ENCODE measurements at regions of chr6 and their contacts with region 1.

Region 1: DNA sequence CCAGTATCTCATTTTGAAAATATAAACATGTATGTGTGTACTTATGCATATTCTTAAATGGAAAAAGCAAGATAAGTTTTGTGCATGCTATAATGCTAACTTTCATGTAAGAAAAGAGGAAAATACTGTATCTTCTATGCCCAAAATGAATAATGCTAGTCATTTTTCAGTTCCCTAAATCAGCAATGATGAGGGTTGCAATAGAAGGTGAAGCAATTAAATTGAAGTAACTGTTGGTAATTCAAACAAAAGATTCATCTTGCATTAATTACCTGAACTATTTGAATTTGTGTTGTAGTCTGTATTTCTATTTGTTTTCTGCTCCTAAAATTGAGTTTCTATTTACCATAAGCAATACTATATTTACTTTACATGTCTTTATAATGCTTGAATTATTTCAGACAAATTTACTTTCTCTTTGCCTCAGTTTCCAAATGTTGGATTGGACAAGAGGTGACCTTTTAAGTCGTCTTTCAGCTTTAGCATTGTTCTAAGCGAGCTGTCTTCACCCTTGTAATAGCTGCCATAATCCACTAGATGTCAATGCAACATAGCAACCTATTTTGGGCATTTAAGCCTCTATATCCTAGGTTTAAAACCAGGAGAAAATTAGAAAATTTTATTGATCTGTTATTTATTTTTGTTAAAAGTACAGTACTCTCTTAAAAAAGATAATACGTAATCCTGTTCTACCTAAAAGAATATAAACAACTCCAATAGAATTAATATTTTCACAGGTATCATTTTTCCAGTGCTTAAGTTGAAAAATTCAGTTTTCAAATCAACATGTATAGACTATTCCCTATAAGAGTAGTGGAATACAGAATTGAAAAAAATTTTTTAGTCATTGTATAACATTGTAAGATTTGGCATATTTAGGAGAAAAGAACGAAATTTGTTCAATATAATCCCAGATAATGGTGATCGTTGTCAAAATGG is 52.3 kb upstream of the IFNGR1 start:
- DNase-seq: peak in 1 of 2 experiments; percentile 50
- H3K4me3 ChIP-seq: no peak overlapping the region
- H3K4me3 Mint-ChIP-seq: no peak overlapping the region
- H3K27ac Mint-ChIP-seq: no peak overlapping the region
- H3K4me1 ChIP-seq: peaks cover 4% of the 10 kb centered on the region; the same call in 1 of the 2 replicates
- H3K4me1 Mint-ChIP-seq: no peaks in the 10 kb centered on the region
- H3K27me3 ChIP-seq: no peaks in the 10 kb centered on the region
- H3K27me3 Mint-ChIP-seq: no peaks in the 10 kb centered on the region
- CTCF ChIP-seq: peak; percentile 76 to 88

Region 2: GRCh38 chr6:137258170-137258569 is 13.3 kb before region 1 on chr6:
- CTCF ChIA-PET with region 1: no interaction called
- POLR2A ChIA-PET with region 1: no interaction called
- intact Hi-C with region 1: no loop called
- DNase-seq: no peak
- H3K4me3 ChIP-seq: no peak overlapping the region
- H3K4me3 Mint-ChIP-seq: no peak overlapping the region
- H3K27ac Mint-ChIP-seq: no peak overlapping the region
- H3K4me1 ChIP-seq: peaks cover 6% of the 10 kb centered on the region; the same call in 1 of the 2 replicates
- H3K4me1 Mint-ChIP-seq: no peaks in the 10 kb centered on the region
- H3K27me3 ChIP-seq: no peaks in the 10 kb centered on the region
- H3K27me3 Mint-ChIP-seq: no peaks in the 10 kb centered on the region
- CTCF ChIP-seq: no peak

Region 3: GRCh38 chr6:137313928-137314855 is 42.7 kb after region 1 on chr6:
- CTCF ChIA-PET with region 1: interaction called, 16 read pairs
- POLR2A ChIA-PET with region 1: no interaction called
- intact Hi-C with region 1: loop called (anchors 1 kb)
- DNase-seq: peak; percentile 60 to 62
- H3K4me3 ChIP-seq: no peak overlapping the region
- H3K4me3 Mint-ChIP-seq: no peak overlapping the region
- H3K27ac Mint-ChIP-seq: no peak overlapping the region
- H3K4me1 ChIP-seq: no peaks in the 10 kb centered on the region; the same call in 1 of the 2 replicates
- H3K4me1 Mint-ChIP-seq: no peaks in the 10 kb centered on the region
- H3K27me3 ChIP-seq: no peaks in the 10 kb centered on the region
- H3K27me3 Mint-ChIP-seq: no peaks in the 10 kb centered on the region
- CTCF ChIP-seq: peak; percentile 78

Region 4: GRCh38 chr6:137543114-137543513 is 271.6 kb after region 1 on chr6:
- CTCF ChIA-PET with region 1: no interaction called
- POLR2A ChIA-PET with region 1: no interaction called
- intact Hi-C with region 1: no loop called
- DNase-seq: peak in 1 of 2 experiments; percentile 15
- H3K4me3 ChIP-seq: no peak overlapping the region
- H3K4me3 Mint-ChIP-seq: no peak overlapping the region
- H3K27ac Mint-ChIP-seq: no peak overlapping the region
- H3K4me1 ChIP-seq: no peaks in the 10 kb centered on the region
- H3K4me1 Mint-ChIP-seq: peaks cover 6% of the 10 kb centered on the region
- H3K27me3 ChIP-seq: no peaks in the 10 kb centered on the region
- H3K27me3 Mint-ChIP-seq: no peaks in the 10 kb centered on the region
- CTCF ChIP-seq: peak in 1 of 2 experiments; percentile 26

Region 5: DNA sequence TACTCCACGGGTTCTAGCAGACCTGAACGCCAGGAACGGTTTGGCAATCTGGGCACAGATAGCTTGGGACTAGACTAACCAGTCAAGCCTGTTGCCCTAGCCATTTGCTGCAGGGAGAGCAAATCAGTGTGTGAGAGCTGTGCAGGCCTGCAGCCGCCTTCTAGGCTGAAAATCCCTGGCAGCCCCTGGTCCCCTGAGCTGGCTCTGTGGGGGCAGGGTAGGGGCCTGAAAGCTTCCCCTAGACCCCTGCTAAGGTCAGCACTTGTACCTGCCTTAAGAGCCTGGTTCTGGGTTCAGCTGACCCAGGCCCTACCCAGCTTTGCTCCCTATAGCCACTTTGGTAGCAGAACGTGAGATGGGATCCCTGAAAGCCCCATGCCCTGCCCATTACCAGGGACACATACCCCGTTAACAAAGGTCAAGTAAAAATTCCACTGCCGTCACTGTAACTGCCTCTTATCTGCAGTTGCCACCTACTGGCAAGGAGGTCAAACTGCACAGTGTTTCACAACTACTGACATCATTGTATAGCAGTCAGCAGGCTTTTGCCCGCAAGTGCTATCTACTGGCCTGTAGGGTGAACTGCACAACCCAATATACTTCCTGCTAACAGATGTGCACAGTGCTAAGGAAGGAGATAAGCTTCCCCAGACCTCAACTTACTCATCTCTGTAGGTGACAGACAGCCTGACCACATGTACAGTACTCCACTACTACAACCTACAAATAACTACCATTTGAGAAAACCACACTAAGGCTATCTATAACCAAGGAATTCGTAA is 317.7 kb after region 1 on chr6:
- CTCF ChIA-PET with region 1: interaction called, 5 read pairs
- POLR2A ChIA-PET with region 1: no interaction called
- intact Hi-C with region 1: loop called (anchors 1 kb)
- DNase-seq: peak; percentile 64 to 68
- H3K4me3 ChIP-seq: no peak overlapping the region
- H3K4me3 Mint-ChIP-seq: no peak overlapping the region
- H3K27ac Mint-ChIP-seq: no peak overlapping the region
- H3K4me1 ChIP-seq: 0 out of 2 replicates have a peak, but pooled peaks cover 9% of the 10 kb centered on the region
- H3K4me1 Mint-ChIP-seq: no peaks in the 10 kb centered on the region
- H3K27me3 ChIP-seq: no peaks in the 10 kb centered on the region
- H3K27me3 Mint-ChIP-seq: no peaks in the 10 kb centered on the region
- CTCF ChIP-seq: peak; percentile 62 to 74

Region 6: GRCh38 chr6:137697267-137697938 is 425.9 kb after region 1 on chr6:
- CTCF ChIA-PET with region 1: no interaction called
- POLR2A ChIA-PET with region 1: no interaction called
- intact Hi-C with region 1: loop called (anchors 1 kb)
- DNase-seq: peak; percentile 73 to 91
- H3K4me3 ChIP-seq: no peak overlapping the region
- H3K4me3 Mint-ChIP-seq: no peak overlapping the region
- H3K27ac Mint-ChIP-seq: peak overlapping the region; percentile 94
- H3K4me1 ChIP-seq: peaks cover 44% of the 10 kb centered on the region
- H3K4me1 Mint-ChIP-seq: peaks cover 27% of the 10 kb centered on the region
- H3K27me3 ChIP-seq: no peaks in the 10 kb centered on the region
- H3K27me3 Mint-ChIP-seq: no peaks in the 10 kb centered on the region
- CTCF ChIP-seq: peak; percentile 34 to 35